K562 (cell line): ENCODE measurements at regions of chr1 and their contacts with region 1.

Region 1: GRCh38 chr1:246699095-246699735 is 25.0 kb upstream of the SCCPDH start:
- DNase-seq: peak; percentile 85 to 95 (median 90)
- ATAC-seq: peak; percentile 92
- H3K4me3 ChIP-seq: no peak overlapping the region
- H3K27ac ChIP-seq: peak overlapping the region; percentile 69
- H3K4me1 ChIP-seq: peaks cover 6 to 11% of the 10 kb centered on the region in 2 experiments; a peak in 4 of 5 replicates
- H3K27me3 ChIP-seq: no peaks in the 10 kb centered on the region
- CTCF ChIP-seq: peak; percentile 92 to 97 (median 97)
- EP300 ChIP-seq: peak; percentile 50; the same call in 1 of the 2 replicates
- POLR2A ChIP-seq: no peak; the same call in 1 of the 2 replicates
- RAD21 ChIP-seq: peak; percentile 80 to 90

Region 2: DNA sequence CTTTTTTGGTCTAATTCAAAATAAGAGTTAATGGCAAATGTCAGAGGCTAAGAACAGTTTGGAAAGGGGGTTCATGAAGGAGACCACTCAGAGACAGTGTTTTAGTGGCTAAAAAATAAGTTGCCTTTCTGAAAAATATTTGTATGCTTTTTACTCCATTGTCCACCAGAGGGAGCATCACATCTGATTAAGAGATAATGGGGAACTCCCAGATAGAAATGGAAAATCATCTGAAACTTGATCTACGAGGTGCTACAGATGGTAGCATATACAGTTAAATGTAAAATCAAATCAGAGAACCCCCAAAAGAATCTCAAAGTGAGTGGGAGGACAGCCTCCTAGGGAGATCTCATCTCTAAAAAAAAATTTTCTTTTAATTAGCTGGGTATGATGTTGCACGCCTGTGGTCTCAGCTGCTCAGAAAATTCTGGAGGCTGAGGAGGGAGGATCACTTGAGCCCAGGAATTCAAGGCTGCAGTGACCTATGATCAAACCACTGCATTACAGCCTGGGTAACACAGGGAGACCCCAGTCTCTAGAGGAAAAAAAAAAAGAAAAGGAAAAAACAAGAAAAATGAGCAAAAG is 201.8 kb before region 1 on chr1:
- CTCF ChIA-PET with region 1: interaction called, 10 read pairs
- POLR2A ChIA-PET with region 1: no interaction called
- in situ Hi-C with region 1: loop called (anchors 5 kb)
- intact Hi-C with region 1: loop called (anchors 1 kb)
- DNase-seq: peak; percentile 62 to 84 (median 67)
- ATAC-seq: peak; percentile 45
- H3K4me3 ChIP-seq: no peak overlapping the region
- H3K27ac ChIP-seq: no peak overlapping the region
- H3K4me1 ChIP-seq: peaks cover 0 to 2% of the 10 kb centered on the region in 2 experiments; a peak in 2 of 5 replicates
- H3K27me3 ChIP-seq: no peaks in the 10 kb centered on the region
- CTCF ChIP-seq: peak; percentile 70 to 91 (median 71); a peak in 5 of 6 replicates
- EP300 ChIP-seq: no peak; the same call in 1 of the 2 replicates
- POLR2A ChIP-seq: no peak
- RAD21 ChIP-seq: peak; percentile 84 to 92

Region 3: DNA sequence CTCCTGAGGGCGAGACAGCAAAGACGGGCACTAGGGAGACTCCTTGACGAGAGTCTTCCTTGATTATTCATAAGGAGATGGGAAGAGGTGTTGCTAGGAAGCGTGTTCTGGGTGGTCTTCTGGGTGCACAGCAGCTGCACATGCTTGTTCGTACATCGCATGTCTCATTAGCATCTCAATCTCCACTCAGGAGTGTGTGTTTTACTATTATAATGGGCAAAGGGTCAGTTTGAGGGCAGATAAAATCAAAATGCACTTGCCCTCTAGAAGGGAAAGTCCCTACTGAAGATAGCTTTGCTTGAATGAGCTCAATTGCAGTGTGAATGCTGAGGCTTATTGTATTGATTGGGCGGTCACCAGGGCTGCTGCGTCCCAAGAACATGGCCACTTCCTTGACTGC is 25.2 kb before region 1 on chr1:
- CTCF ChIA-PET with region 1: no interaction called
- POLR2A ChIA-PET with region 1: no interaction called
- in situ Hi-C with region 1: no loop called
- intact Hi-C with region 1: no loop called
- DNase-seq: no peak
- ATAC-seq: no peak
- H3K4me3 ChIP-seq: no peak overlapping the region
- H3K27ac ChIP-seq: no peak overlapping the region
- H3K4me1 ChIP-seq: no peaks in the 10 kb centered on the region
- H3K27me3 ChIP-seq: no peaks in the 10 kb centered on the region
- CTCF ChIP-seq: no peak
- EP300 ChIP-seq: no peak
- POLR2A ChIP-seq: no peak
- RAD21 ChIP-seq: no peak

Region 4: GRCh38 chr1:246753670-246754535 is 54.7 kb after region 1 on chr1:
- CTCF ChIA-PET with region 1: no interaction called
- POLR2A ChIA-PET with region 1: no interaction called
- in situ Hi-C with region 1: no loop called
- intact Hi-C with region 1: loop called (anchors 2 kb)
- DNase-seq: peak; percentile 67 to 81 (median 70)
- ATAC-seq: peak; percentile 99
- H3K4me3 ChIP-seq: no peak overlapping the region
- H3K27ac ChIP-seq: no peak overlapping the region
- H3K4me1 ChIP-seq: 0 out of 5 replicates have a peak, but pooled peaks cover 0 to under 1% of the 10 kb centered on the region in 2 experiments
- H3K27me3 ChIP-seq: no peaks in the 10 kb centered on the region
- CTCF ChIP-seq: peak; percentile 82 to 94 (median 90)
- EP300 ChIP-seq: no peak
- POLR2A ChIP-seq: no peak
- RAD21 ChIP-seq: peak; percentile 75 to 87

Region 5: GRCh38 chr1:246971090-246971721 is 272.0 kb after region 1 on chr1:
- CTCF ChIA-PET with region 1: no interaction called
- POLR2A ChIA-PET with region 1: no interaction called
- in situ Hi-C with region 1: no loop called
- intact Hi-C with region 1: loop called (anchors 5 kb)
- DNase-seq: peak in 2 of 4 experiments; percentile 25 to 72
- ATAC-seq: peak; percentile 75
- H3K4me3 ChIP-seq: no peak overlapping the region
- H3K27ac ChIP-seq: no peak overlapping the region
- H3K4me1 ChIP-seq: no peaks in the 10 kb centered on the region
- H3K27me3 ChIP-seq: no peaks in the 10 kb centered on the region
- CTCF ChIP-seq: peak; percentile 78 to 88 (median 81)
- EP300 ChIP-seq: no peak
- POLR2A ChIP-seq: no peak
- RAD21 ChIP-seq: peak; percentile 57 to 80